Sigmoid colon (tissue), 7 donors: ENCODE measurements at regions of chr9 and their contacts with region 1.

Region 1: DNA sequence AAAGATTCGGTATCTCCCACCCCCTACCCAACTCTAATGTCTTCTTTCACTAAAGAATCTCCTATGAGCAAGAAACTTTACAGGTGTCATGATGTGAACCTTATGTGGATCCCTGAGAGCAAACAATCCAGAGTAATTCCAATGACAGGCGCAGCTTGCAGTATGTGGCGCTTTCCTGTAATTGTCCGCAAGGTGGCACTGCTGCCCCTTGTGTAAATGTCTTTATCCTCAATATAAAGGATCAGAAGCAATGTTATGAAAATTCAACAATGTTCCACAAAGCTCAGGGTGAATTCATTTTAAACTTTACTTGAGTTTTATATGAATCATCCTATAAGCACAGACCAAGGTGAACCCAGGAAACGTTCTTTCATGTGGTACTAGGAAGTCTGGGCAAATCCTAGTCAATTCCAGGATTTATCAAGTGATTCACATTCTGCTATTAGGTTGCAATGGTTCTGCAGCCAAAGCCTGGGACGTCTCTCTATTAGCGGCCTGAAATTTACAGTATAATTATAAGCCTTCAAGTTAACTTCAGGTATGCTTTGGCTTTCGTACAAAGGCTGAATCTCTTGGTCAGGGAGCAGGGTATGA is 113.7 kb downstream of the TRPM6 start:
- DNase-seq: peak; percentile 86
- H3K4me3 ChIP-seq: no peak overlapping the region
- H3K27ac ChIP-seq: no peak overlapping the region
- H3K4me1 ChIP-seq: no peaks in the 10 kb centered on the region
- H3K27me3 ChIP-seq: peaks cover 0 to 10% (median 0%) of the 10 kb centered on the region in 3 donors
- CTCF ChIP-seq: peak; percentile 63 to 86 (median 71)
- EP300 ChIP-seq: no peak
- POLR2A ChIP-seq: no peak

Region 2: GRCh38 chr9:75001719-75002422 is 227.9 kb after region 1 on chr9:
- intact Hi-C with region 1: loop called (anchors 1 kb)
- DNase-seq: no peak
- H3K4me3 ChIP-seq: no peak overlapping the region
- H3K27ac ChIP-seq: no peak overlapping the region
- H3K4me1 ChIP-seq: peaks cover 0 to 5% (median 2%) of the 10 kb centered on the region in 4 donors
- H3K27me3 ChIP-seq: no peaks in the 10 kb centered on the region
- CTCF ChIP-seq: peak; percentile 42 to 79 (median 72)
- EP300 ChIP-seq: no peak
- POLR2A ChIP-seq: no peak

Region 3: GRCh38 chr9:75083188-75083970 is 309.4 kb after region 1 on chr9:
- intact Hi-C with region 1: loop called (anchors 1 kb)
- DNase-seq: no peak
- H3K4me3 ChIP-seq: no peak overlapping the region
- H3K27ac ChIP-seq: no peak overlapping the region
- H3K4me1 ChIP-seq: peaks cover 0 to 11% (median 2%) of the 10 kb centered on the region in 4 donors
- H3K27me3 ChIP-seq: no peaks in the 10 kb centered on the region
- CTCF ChIP-seq: no peak
- EP300 ChIP-seq: no peak
- POLR2A ChIP-seq: no peak